ENCODE measurements at regions of chr14 and their contacts with region 1.

Region 1: GRCh38 chr14:77862154-77862786 is 62.4 kb downstream of the ADCK1 start:
- DNase-seq: peak; percentile 80
- H3K4me3 Mint-ChIP-seq: no peak overlapping the region
- H3K27ac Mint-ChIP-seq: no peak overlapping the region
- H3K4me1 Mint-ChIP-seq: peaks cover 32% of the 10 kb centered on the region
- H3K27me3 Mint-ChIP-seq: no peaks in the 10 kb centered on the region
- CTCF ChIP-seq: peak; percentile 87

Region 2: DNA sequence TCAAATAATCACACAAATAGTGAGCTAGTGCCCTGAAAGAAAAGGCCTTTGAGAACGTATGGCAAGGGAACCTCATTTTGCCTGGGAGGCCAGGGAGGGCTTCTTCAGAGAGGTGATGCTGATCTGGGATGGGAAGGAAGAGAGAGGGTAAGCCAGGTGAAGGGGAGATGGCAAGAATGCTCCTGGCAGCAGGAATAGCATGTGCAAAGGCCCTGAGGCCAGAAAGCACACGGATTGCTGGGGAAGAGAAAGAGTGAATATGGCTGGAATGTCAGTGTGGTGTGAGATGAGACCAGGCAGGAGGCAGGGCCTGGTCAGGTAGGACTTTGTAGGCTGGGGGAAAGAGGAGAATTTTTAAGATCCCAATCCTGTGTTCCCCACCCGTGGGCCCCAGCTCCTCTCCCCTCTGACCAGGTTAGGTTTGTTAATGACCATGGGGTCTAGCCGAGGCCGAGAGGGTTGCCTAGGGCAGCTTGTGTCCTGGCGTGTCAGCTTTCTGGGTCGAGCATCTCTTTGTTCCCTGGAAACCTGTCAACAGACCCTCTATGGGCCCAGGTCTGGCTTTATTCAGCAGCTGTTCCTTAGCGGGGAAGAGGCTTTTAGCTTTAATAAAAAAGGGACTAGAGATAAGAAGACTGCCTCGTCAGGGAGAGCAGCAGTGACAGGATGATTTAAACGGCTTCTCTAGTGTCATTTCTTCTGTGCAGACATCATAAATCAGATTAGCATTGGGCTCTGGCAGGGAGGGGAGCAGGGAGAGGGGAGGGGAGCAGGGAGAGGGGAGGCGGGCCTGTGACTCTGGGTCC is 61.1 kb after region 1 on chr14:
- CTCF ChIA-PET with region 1: no interaction called
- intact Hi-C with region 1: no loop called
- DNase-seq: no peak
- H3K4me3 Mint-ChIP-seq: no peak overlapping the region
- H3K27ac Mint-ChIP-seq: no peak overlapping the region
- H3K4me1 Mint-ChIP-seq: no peaks in the 10 kb centered on the region
- H3K27me3 Mint-ChIP-seq: no peaks in the 10 kb centered on the region
- CTCF ChIP-seq: no peak

Region 3: GRCh38 chr14:78153064-78153341 is 290.7 kb after region 1 on chr14:
- CTCF ChIA-PET with region 1: no interaction called
- intact Hi-C with region 1: loop called (anchors 1 kb)
- DNase-seq: peak; percentile 13
- H3K4me3 Mint-ChIP-seq: no peak overlapping the region
- H3K27ac Mint-ChIP-seq: no peak overlapping the region
- H3K4me1 Mint-ChIP-seq: no peaks in the 10 kb centered on the region
- H3K27me3 Mint-ChIP-seq: peaks cover 61% of the 10 kb centered on the region
- CTCF ChIP-seq: no peak

Measured in Calu3 (cell line).